Activated T-helper 2 cell treated with anti-CD3 and anti-CD28 coated beads, Interferon-gamma antibody, Interleukin-2, Interleukin-4, amounts not matched to agents 10 μg/mL and 5 μg/mL and 100 μg/mL, durations not matched to agents 14 hours and 24 hours and 36 hours (primary cell): ENCODE measurements at regions of chr7 and their contacts with region 1.

Region 1: DNA sequence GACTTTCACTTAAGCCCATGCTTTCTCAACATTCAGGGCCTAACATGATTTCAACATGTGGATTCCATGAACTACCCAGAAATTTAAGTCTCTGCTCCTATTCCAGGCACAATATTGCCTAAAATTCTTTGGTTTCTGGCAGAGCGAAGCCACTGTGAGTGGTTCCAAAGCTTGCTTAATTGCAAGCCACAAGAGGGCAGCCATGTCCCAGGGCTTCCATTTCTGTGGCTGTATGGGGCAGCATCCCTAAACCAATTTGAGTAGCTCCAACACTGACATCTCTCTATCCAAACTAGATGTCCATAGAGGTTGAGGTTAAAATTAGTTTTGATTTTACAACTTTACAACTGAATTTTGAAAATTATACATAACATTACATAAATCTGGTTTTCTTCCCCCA is 56.3 kb upstream of the MDFIC start:
- DNase-seq: peak; percentile 27
- H3K4me3 Mint-ChIP-seq: no peak overlapping the region
- H3K27ac Mint-ChIP-seq: no peak overlapping the region
- H3K4me1 Mint-ChIP-seq: no peaks in the 10 kb centered on the region
- H3K27me3 Mint-ChIP-seq: no peaks in the 10 kb centered on the region

Region 2: GRCh38 chr7:114889646-114890285 is 24.2 kb after region 1 on chr7:
- intact Hi-C with region 1: loop called (anchors 2 kb)
- DNase-seq: no peak
- H3K4me3 Mint-ChIP-seq: no peak overlapping the region
- H3K27ac Mint-ChIP-seq: peak overlapping the region; percentile 84
- H3K4me1 Mint-ChIP-seq: peaks cover 40% of the 10 kb centered on the region
- H3K27me3 Mint-ChIP-seq: no peaks in the 10 kb centered on the region

Region 3: GRCh38 chr7:114922016-114922651 is 56.6 kb after region 1 on chr7 and contains the start of gene MDFIC:
- intact Hi-C with region 1: loop called (anchors 2 kb)
- DNase-seq: peak; percentile 55
- H3K4me3 Mint-ChIP-seq: peak within 1 kb of the TSS; percentile 94
- H3K27ac Mint-ChIP-seq: peak within 1 kb of the TSS; percentile 98
- H3K4me1 Mint-ChIP-seq: peaks cover 57% of the 10 kb centered on the region
- H3K27me3 Mint-ChIP-seq: no peaks in the 10 kb centered on the region
- total RNA-seq, gene MDFIC: 119 and 121 TPM in 2 replicates

Region 4: GRCh38 chr7:115217373-115217772 is 351.8 kb after region 1 on chr7:
- intact Hi-C with region 1: loop called (anchors 5 kb)
- DNase-seq: no peak
- H3K4me3 Mint-ChIP-seq: no peak overlapping the region
- H3K27ac Mint-ChIP-seq: no peak overlapping the region
- H3K4me1 Mint-ChIP-seq: peaks cover 8% of the 10 kb centered on the region
- H3K27me3 Mint-ChIP-seq: peaks cover 12% of the 10 kb centered on the region

Region 5: GRCh38 chr7:115475761-115476385 is 610.3 kb after region 1 on chr7:
- intact Hi-C with region 1: loop called (anchors 10 kb)
- DNase-seq: no peak
- H3K4me3 Mint-ChIP-seq: no peak overlapping the region
- H3K27ac Mint-ChIP-seq: no peak overlapping the region
- H3K4me1 Mint-ChIP-seq: peaks cover 5% of the 10 kb centered on the region
- H3K27me3 Mint-ChIP-seq: peaks cover 26% of the 10 kb centered on the region